Activated CD8-positive, alpha-beta T cell treated with anti-CD3 and anti-CD28 coated beads, Interleukin-2, amount 10 ng/mL, durations not matched to agents 7 days and 5 days (primary cell): ENCODE measurements at regions of chr14 and their contacts with region 1.

Region 1: GRCh38 chr14:71753126-71753830 is 179.0 kb upstream of the RGS6 start:
- DNase-seq: peak; percentile 78
- ATAC-seq: peak; percentile 65
- H3K4me3 Mint-ChIP-seq: no peak overlapping the region
- H3K27ac Mint-ChIP-seq: no peak overlapping the region
- H3K4me1 Mint-ChIP-seq: peaks cover 19% of the 10 kb centered on the region
- H3K27me3 Mint-ChIP-seq: peaks cover 2% of the 10 kb centered on the region

Region 2: GRCh38 chr14:71103662-71104484 is 649.4 kb before region 1 on chr14:
- CTCF ChIA-PET with region 1: interaction called, 31 read pairs
- POLR2A ChIA-PET with region 1: no interaction called
- DNase-seq: peak; percentile 44
- ATAC-seq: peak; percentile 60
- H3K4me3 Mint-ChIP-seq: no peak overlapping the region
- H3K27ac Mint-ChIP-seq: no peak overlapping the region
- H3K4me1 Mint-ChIP-seq: no peaks in the 10 kb centered on the region
- H3K27me3 Mint-ChIP-seq: no peaks in the 10 kb centered on the region

Region 3: GRCh38 chr14:71138448-71139293 is 614.6 kb before region 1 on chr14:
- CTCF ChIA-PET with region 1: interaction called, 69 read pairs
- POLR2A ChIA-PET with region 1: no interaction called
- DNase-seq: peak; percentile 67
- ATAC-seq: peak; percentile 20
- H3K4me3 Mint-ChIP-seq: no peak overlapping the region
- H3K27ac Mint-ChIP-seq: peak overlapping the region; percentile 5
- H3K4me1 Mint-ChIP-seq: peaks cover 52% of the 10 kb centered on the region
- H3K27me3 Mint-ChIP-seq: no peaks in the 10 kb centered on the region

Region 4: GRCh38 chr14:71739273-71739937 is 13.9 kb before region 1 on chr14:
- CTCF ChIA-PET with region 1: interaction called, 21 read pairs
- POLR2A ChIA-PET with region 1: no interaction called
- DNase-seq: no peak
- ATAC-seq: no peak
- H3K4me3 Mint-ChIP-seq: no peak overlapping the region
- H3K27ac Mint-ChIP-seq: no peak overlapping the region
- H3K4me1 Mint-ChIP-seq: peaks cover 5% of the 10 kb centered on the region
- H3K27me3 Mint-ChIP-seq: peaks cover 6% of the 10 kb centered on the region

Region 5: GRCh38 chr14:71803524-71804260 is 50.4 kb after region 1 on chr14:
- CTCF ChIA-PET with region 1: no interaction called
- POLR2A ChIA-PET with region 1: no interaction called
- DNase-seq: no peak
- ATAC-seq: no peak
- H3K4me3 Mint-ChIP-seq: no peak overlapping the region
- H3K27ac Mint-ChIP-seq: no peak overlapping the region
- H3K4me1 Mint-ChIP-seq: no peaks in the 10 kb centered on the region
- H3K27me3 Mint-ChIP-seq: peaks cover 20% of the 10 kb centered on the region

Region 6: DNA sequence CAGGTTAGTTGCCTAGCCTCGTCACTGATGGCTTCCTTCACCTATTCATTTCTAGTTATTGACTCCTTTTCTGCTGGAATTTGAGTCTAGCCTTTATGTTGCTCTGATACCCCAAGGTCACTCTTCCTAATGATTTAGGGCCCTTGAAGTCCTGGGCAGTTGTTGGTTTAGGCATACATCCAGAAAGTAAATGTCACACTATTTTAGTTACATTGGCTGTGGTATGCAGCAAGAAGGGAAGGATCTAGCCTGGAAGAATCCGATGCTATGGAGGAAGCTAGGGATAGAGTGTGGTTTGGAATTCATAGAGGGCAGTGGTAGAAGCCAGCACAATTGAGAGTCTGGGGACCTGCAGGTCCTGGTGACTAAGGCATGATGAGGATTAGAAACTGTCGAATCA is 217.0 kb after region 1 on chr14:
- CTCF ChIA-PET with region 1: no interaction called
- POLR2A ChIA-PET with region 1: no interaction called
- DNase-seq: no peak
- ATAC-seq: no peak
- H3K4me3 Mint-ChIP-seq: no peak overlapping the region
- H3K27ac Mint-ChIP-seq: no peak overlapping the region
- H3K4me1 Mint-ChIP-seq: no peaks in the 10 kb centered on the region
- H3K27me3 Mint-ChIP-seq: peaks cover 5% of the 10 kb centered on the region